ENCODE measurements at regions of chr6 and their contacts with region 1.

Region 1: DNA sequence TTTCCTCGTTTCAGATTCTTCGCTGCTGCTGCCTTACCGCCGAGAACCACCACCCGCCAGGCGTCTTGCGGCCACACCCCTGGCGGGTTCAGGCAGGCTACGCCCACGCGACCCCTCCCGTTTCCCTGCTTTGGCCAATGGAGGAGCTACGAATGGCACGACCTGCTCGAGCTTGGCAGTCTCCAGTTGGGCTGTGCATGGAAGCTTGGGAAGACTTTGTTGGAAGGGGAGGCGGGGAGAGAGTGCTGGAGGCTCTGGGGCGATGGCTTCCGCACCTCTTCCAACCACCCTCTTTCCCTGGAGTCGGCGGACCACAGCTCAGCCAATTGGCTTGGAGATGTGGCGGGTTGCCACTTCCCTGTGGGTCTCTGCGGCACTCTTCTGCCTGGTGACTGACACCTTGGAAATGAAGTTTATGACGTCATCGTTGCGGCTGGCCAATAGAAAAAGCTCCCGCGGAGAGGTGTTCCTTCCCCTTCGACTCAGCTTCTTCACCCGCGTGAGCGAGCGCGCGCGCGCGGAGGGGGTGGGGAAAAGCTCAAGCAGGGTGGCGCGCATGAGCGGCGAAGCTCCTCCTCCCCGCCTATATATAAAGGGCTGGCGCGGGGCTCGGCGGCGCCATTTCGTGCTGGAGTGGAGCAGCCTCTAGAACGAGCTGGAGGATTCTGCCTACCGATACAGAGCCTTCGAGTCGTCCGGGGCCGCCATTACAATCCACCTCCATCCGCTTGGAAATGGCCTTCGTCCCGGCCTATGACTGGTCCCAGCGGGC is 3.4 kb downstream of the BRD2 start:
- DNase-seq: peak; percentile 99 to 100 (median 100)
- ATAC-seq: peak; percentile 53
- H3K4me3 ChIP-seq: peak overlapping the region; percentile 97
- H3K4me3 Mint-ChIP-seq: peak overlapping the region; percentile 98
- H3K27ac ChIP-seq: peak overlapping the region; percentile 91 to 98
- H3K27ac Mint-ChIP-seq: peak overlapping the region; percentile 100
- H3K4me1 ChIP-seq: peaks cover 52% of the 10 kb centered on the region
- H3K4me1 Mint-ChIP-seq: peaks cover 48% of the 10 kb centered on the region
- H3K27me3 ChIP-seq: no peaks in the 10 kb centered on the region
- H3K27me3 Mint-ChIP-seq: no peaks in the 10 kb centered on the region
- CTCF ChIP-seq: no peak

Region 2: GRCh38 chr6:31493875-31494694 is 1477.7 kb before region 1 on chr6:
- CTCF ChIA-PET with region 1: no interaction called
- POLR2A ChIA-PET with region 1: interaction called, 11 read pairs
- intact Hi-C with region 1: no loop called
- DNase-seq: peak; percentile 51 to 91 (median 74)
- ATAC-seq: peak; percentile 39
- H3K4me3 ChIP-seq: peak overlapping the region; percentile 88
- H3K4me3 Mint-ChIP-seq: peak overlapping the region; percentile 58
- H3K27ac ChIP-seq: peak overlapping the region; percentile 65 to 68
- H3K27ac Mint-ChIP-seq: peak overlapping the region; percentile 83
- H3K4me1 ChIP-seq: peaks cover 69% of the 10 kb centered on the region
- H3K4me1 Mint-ChIP-seq: peaks cover 57% of the 10 kb centered on the region
- H3K27me3 ChIP-seq: no peaks in the 10 kb centered on the region
- H3K27me3 Mint-ChIP-seq: no peaks in the 10 kb centered on the region
- CTCF ChIP-seq: peak; percentile 80

Region 3: DNA sequence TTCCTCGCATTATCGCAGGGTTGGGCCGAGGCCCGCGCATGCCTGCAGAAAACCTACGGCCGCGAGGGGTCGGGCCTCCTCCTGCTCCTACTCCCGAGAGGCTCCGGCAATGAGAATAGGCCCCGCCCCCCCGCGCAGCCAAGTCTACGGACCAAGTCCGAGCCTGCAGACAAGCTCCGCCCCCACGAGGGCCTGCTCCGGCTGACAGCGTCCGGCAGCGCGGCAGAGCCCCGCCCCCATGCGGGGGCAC is 776.2 kb before region 1 on chr6:
- CTCF ChIA-PET with region 1: no interaction called
- POLR2A ChIA-PET with region 1: interaction called, 20 read pairs
- intact Hi-C with region 1: loop called in 1 of 2 experiments (anchors 5 kb)
- DNase-seq: peak in 13 of 14 experiments; percentile 97 to 100 (median 100)
- ATAC-seq: peak; percentile 82
- H3K4me3 ChIP-seq: peak overlapping the region; percentile 100
- H3K4me3 Mint-ChIP-seq: peak overlapping the region; percentile 99
- H3K27ac ChIP-seq: peak overlapping the region; percentile 87 to 100
- H3K27ac Mint-ChIP-seq: peak overlapping the region; percentile 96
- H3K4me1 ChIP-seq: peaks cover 52% of the 10 kb centered on the region
- H3K4me1 Mint-ChIP-seq: peaks cover 48% of the 10 kb centered on the region
- H3K27me3 ChIP-seq: no peaks in the 10 kb centered on the region
- H3K27me3 Mint-ChIP-seq: no peaks in the 10 kb centered on the region
- CTCF ChIP-seq: peak; percentile 31

Region 4: GRCh38 chr6:32885698-32886286 is 86.0 kb before region 1 on chr6:
- CTCF ChIA-PET with region 1: no interaction called
- POLR2A ChIA-PET with region 1: interaction called, 15 read pairs
- intact Hi-C with region 1: no loop called
- DNase-seq: peak in 3 of 14 experiments; percentile 83 to 85 (median 83)
- ATAC-seq: peak; percentile 65
- H3K4me3 ChIP-seq: no peak overlapping the region
- H3K4me3 Mint-ChIP-seq: no peak overlapping the region
- H3K27ac ChIP-seq: no peak overlapping the region
- H3K27ac Mint-ChIP-seq: no peak overlapping the region
- H3K4me1 ChIP-seq: no peaks in the 10 kb centered on the region
- H3K4me1 Mint-ChIP-seq: no peaks in the 10 kb centered on the region
- H3K27me3 ChIP-seq: no peaks in the 10 kb centered on the region
- H3K27me3 Mint-ChIP-seq: no peaks in the 10 kb centered on the region
- CTCF ChIP-seq: peak; percentile 73

Region 5: DNA sequence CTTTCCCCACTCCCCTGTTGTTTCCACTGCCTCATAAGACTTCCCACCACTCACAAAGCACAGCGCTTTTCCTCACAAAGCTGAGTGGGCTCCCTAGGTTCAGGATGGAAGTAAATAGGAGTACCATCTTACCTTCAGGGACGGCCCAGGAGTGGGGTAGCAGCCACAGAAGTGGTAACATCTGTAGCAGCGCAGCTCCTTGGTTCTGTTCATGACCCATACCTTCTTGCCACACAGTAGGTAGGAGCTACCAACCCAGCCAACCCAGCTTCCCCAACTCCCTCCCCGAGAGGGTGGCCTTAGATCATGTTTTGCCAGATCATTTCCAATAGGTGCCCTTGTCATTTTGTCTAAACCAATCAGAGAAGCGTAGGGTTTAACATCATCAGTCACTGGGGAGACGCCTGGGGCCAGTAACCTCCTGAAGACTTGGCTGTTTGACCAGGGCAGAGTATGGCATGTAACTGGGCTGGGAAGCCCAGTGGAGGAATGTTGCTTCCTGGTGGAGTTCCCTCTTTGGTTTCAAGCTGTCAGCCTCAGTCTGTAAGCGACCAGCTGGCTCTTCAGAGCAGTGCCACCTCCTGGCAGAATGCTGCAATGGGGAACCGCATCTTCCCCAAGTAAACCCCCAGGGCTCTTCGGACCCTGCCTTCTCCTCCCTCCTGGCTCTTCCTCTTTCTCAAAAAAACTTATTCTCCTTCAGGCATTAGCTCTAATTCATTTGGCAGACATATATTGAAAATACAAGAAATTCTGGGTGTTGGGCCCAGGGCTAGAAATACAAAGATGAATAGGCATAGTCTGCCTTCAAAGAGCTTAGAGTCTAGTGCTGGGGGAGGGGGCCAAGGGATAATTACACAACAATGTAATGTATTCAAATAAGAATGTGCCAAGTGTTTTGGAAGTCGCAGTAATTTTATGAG is 18.7 kb before region 1 on chr6 and contains the start of gene HLA-DMA:
- CTCF ChIA-PET with region 1: interaction called, 177 read pairs
- POLR2A ChIA-PET with region 1: interaction called, 323 read pairs
- intact Hi-C with region 1: loop called (anchors 1 kb)
- DNase-seq: peak; percentile 57 to 92 (median 70)
- ATAC-seq: peak; percentile 98
- H3K4me3 ChIP-seq: peak within 1 kb of the TSS; percentile 49
- H3K4me3 Mint-ChIP-seq: peak within 1 kb of the TSS; percentile 71
- H3K27ac ChIP-seq: peak within 1 kb of the TSS; percentile 5 to 44
- H3K27ac Mint-ChIP-seq: peak within 1 kb of the TSS; percentile 82
- H3K4me1 ChIP-seq: peaks cover 26% of the 10 kb centered on the region
- H3K4me1 Mint-ChIP-seq: peaks cover 45% of the 10 kb centered on the region
- H3K27me3 ChIP-seq: no peaks in the 10 kb centered on the region
- H3K27me3 Mint-ChIP-seq: no peaks in the 10 kb centered on the region
- CTCF ChIP-seq: peak; percentile 86
- total RNA-seq, gene HLA-DMA: 14.4 to 16.5 TPM

Region 6: DNA sequence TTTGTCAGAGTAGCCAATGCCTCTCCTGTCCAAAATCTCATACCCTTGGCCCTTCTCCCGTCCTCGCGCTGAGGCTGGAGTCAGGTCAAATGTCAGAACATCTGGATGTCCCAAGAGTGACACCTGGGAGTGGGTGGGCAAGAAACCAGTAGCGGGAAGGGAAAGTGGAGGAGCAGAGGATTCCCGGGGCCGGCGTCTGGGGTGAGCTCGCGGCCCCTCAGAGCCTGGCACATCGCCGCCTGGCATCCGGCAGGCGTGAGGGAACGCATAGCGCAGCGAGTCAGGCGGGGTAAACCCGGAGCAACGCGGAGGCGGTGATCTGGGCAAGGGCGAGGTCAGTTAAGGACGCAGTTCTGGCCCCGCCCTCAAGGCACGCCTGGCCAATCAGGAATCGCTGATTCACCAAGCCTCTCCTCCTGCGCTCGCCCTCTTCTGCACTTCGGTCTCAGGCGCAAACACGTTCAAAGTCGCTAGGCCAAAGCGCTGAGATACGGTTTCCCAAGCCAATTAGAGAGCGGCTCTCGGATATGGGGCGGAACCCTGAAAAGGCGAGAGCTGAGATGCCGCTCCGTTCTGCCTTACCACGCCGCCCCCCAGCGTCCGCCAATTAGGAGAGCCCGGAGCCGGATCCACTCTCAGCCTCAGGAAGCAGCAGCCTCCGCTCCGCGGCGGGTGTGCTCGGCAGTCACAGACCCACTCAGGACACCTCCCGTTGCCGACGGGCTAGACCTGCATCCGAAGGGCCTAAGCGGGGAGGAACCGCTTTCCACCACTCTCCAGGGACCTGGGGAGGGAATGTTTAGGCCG is 277.4 kb after region 1 on chr6:
- CTCF ChIA-PET with region 1: no interaction called
- POLR2A ChIA-PET with region 1: interaction called, 42 read pairs
- intact Hi-C with region 1: no loop called
- DNase-seq: peak; percentile 89 to 99 (median 94)
- ATAC-seq: peak; percentile 83
- H3K4me3 ChIP-seq: peak overlapping the region; percentile 70
- H3K4me3 Mint-ChIP-seq: peak overlapping the region; percentile 92
- H3K27ac ChIP-seq: peak overlapping the region; percentile 98
- H3K27ac Mint-ChIP-seq: peak overlapping the region; percentile 97
- H3K4me1 ChIP-seq: peaks cover 32% of the 10 kb centered on the region
- H3K4me1 Mint-ChIP-seq: peaks cover 37% of the 10 kb centered on the region
- H3K27me3 ChIP-seq: no peaks in the 10 kb centered on the region
- H3K27me3 Mint-ChIP-seq: no peaks in the 10 kb centered on the region
- CTCF ChIP-seq: peak; percentile 32

Region 7: DNA sequence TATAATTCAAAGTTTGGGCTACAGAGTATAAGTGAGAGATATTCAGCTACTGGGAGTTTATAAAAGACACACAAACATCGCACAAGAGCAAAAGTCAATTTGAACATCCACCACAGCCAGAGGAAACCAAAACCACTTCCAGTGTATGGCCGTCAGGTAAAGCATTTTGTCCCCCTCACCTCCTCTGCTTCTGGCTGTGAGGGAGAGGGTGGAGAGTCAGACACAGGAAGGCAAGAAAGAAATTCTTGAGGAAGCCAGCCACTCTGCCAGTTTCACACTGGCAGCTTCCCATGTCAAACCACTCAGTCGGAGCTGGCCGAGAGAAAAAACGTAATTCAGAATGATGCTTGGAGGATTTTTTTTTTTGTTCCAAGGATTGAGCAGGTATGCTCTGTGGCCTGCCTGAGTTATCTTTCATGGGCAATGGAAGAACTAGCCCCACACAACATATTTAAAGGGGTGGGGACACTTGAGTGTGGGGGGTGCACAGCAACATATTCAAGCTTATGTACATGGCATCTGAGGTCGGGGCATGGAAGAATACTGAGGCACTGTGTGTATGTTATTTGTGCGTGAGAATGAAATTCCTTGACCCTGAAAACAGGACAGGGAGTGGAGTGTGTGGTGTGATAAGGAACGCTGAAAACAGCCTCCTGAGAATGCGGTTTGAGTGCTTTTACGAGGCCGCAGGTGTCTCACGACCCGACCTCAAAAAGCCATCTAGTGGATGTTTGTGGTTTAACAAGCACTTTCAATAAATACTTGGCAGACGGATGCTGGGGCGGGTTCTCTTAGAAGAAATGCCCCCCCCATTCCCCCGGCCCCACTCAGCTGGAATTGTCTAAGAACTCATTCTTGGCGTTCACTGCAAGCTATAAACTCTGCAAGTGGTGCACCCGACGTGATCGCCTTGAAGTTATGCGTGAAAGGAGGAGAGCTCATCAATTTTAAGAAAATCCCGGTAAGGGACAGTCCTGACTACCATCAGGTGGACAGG is 373.2 kb after region 1 on chr6:
- CTCF ChIA-PET with region 1: no interaction called
- POLR2A ChIA-PET with region 1: interaction called, 30 read pairs
- intact Hi-C with region 1: no loop called
- DNase-seq: peak; percentile 53 to 93 (median 62)
- ATAC-seq: peak; percentile 52
- H3K4me3 ChIP-seq: peak overlapping the region; percentile 24
- H3K4me3 Mint-ChIP-seq: peak overlapping the region; percentile 90
- H3K27ac ChIP-seq: peak overlapping the region; percentile 79 to 88
- H3K27ac Mint-ChIP-seq: peak overlapping the region; percentile 98
- H3K4me1 ChIP-seq: peaks cover 49% of the 10 kb centered on the region
- H3K4me1 Mint-ChIP-seq: peaks cover 38% of the 10 kb centered on the region
- H3K27me3 ChIP-seq: no peaks in the 10 kb centered on the region
- H3K27me3 Mint-ChIP-seq: no peaks in the 10 kb centered on the region
- CTCF ChIP-seq: peak; percentile 64